Cardiac septum (tissue), 1 donor: ENCODE measurements at regions of chr2 and their contacts with region 1.

Region 1: DNA sequence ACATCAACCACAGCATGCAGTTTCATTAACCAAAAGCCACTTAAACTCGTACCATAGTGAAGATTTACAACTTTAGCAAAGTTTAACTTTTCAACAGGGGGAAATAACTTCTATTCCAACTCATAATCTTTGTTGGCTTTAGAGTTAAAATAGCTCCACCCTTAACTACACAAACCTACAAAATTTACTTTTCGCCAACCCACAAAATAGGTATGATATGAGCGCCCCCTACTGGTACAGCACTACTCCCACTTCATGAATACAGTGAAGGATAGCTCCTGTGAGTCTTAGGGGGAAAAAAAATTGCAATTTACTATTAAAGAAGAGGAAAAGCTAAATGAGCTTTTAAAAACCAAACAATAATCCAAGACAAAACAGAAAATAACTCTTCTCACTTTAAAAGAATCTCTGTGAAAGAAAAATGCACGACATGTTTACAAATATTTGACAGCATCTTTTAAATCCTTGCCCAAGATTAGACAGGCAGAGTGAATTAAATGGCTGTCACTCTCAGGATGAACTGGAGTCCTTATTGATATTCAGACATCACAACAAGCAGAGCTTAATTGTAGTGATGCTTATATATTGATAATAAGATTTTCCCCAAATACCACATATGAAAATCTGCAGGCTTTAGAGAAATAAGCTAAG is 32.2 kb downstream of the TMEFF2 start:
- DNase-seq: no peak

Region 2: DNA sequence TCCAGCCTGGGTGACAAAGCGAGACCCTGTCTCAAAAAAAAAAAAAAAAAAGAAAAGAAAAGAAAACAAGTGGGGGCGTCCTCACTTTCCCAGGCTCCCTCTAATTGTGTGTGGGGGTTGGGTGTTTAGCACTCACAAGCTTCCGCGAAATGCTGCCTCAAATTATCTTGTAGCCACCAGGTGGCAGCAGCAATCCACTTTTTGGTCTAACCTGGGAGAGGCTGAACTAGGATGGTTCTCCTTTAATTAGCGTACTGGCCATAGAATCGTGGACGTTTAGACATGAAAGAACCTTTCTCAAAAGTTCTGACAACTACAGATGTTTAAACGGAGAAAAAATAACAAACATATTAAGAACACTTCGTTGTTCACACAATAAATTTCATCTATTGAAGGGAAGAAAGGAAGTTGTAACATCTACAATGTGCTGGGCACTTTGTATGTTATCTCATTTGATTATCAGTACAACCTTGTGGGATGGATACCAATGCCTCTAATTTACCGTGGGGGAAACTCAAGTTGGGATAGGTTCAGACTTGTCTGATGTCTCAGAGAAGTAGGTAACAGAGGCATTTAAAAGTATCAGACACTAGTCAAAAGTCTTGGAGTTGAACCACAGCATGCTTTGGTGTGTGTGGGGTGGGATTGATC is 607.3 kb before region 1 on chr2:
- intact Hi-C with region 1: loop called (anchors 2 kb)
- DNase-seq: peak; percentile 85

Region 3: DNA sequence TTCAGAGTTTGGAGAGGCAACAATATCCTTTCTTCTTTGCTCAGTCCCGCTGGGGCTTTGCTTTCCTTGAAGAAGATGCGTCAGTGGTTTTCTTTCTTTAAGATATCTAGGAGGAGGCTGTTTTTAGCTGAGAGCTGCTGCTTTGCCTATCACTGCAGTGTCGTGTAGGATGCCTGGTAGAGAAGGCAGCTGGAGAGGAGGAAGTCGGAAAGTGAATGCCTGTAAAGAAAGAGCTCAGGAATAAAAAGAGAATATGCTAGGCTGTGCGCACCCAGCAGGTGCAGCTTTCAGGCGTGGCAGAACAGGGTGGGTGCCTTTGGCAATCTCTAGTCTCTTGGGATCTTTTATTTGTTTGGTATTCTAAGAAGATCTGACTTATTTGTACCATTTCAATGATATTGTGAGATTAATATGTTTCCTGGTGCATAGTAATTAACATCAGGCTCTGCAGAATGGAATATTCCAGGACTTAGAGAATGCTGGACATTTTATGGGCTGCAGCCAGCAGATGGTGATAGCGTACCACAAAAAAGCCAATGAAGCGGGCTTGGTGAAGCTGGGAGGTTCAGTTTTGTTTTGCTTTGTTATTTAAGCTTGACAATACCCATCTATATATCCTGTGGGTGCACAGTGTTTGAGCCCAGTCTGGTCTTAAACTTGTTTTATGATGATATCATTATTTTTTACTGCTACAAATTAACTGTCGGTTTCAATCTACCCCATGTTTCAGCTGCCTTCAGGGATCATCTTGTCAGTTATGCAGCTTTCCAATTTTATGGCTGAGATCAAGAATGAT is 350.5 kb before region 1 on chr2:
- intact Hi-C with region 1: loop called (anchors 1 kb)
- DNase-seq: no peak

Region 4: DNA sequence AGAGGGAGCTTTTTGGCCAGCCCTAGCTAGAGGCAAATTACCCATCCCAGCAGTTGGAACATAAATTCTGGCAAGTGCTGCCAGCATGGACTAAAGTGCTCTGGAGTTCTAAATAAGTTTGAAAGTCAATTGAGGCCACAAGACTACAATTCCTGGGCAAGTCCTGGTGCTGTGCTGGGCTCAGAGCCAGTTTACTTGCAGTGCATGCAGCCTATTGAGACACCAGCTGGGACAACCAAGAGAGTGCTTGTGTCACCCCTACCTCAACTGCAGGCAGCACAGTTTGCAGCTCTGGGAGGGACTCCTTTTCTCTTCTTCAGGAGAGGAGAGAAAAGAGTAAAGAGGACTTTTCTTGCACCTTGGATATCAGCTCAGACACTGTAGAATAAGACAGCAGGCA is 309.5 kb after region 1 on chr2:
- intact Hi-C with region 1: no loop called
- DNase-seq: no peak

Region 5: DNA sequence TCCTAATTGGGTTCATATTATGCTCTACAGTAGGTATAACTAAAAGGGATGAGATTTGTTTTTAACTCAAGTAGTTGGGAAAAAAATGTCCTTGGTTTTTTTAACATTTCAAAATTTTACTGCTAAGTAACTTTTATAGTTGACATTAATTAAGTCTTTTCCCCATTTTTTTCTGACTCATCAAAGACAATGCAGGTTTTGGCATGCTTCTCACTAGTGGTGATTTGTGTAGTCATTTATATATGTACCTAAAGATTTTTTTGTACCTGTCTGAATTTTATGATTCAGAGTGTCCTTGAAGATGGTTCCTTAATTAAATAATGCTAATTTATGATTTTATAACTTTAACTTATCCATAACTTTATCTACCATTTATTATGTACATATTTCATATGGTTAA is 914.5 kb after region 1 on chr2:
- intact Hi-C with region 1: no loop called
- DNase-seq: no peak